ENCODE measurements at regions of chr12 and their contacts with region 1.

Region 1: DNA sequence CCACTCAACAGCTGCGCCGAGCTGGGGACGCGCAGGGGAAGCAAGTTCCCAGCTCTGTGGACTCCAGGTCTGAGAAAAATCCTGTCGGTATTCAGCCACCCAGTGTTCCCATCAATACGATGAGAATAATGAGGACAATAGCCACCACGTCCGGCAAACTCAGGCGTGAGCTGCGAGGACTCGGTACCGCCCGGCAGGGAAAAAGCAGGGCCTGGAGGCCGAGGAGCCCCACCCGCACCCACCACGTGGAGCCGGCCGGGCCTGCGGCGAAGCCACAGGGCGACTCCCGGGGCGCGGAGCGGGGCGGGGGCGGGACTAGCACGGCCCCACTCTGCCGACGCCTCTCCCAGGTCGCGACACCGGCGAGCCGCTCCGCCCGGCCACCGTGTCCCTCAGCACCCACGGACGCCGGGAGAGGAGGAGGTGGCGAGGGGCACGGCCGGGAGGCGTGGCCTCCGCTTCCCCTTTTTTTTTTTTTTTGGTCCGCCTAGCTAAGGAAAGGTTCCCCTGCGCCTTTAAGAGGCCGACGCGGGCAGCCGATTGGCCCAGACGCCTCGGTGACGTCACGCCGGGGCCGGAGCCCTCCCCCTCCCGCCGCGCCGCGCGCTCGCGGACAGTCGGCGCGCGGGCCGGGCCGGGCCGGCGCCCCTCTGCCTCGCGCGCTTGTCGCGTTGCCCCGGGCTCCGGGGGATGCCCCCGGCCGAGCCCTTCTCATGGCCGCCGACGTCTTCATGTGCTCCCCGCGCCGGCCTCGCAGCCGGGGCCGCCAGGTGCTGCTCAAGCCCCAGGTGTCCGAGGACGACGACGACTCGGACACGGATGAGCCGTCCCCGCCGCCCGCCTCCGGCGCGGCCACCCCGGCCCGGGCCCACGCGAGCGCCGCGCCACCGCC is at the start of gene MLXIP:
- DNase-seq: peak; percentile 92 to 95
- H3K4me3 ChIP-seq: peak within 1 kb of the TSS; percentile 64
- H3K4me3 Mint-ChIP-seq: peak within 1 kb of the TSS; percentile 76
- H3K27ac Mint-ChIP-seq: peak within 1 kb of the TSS; percentile 71
- H3K4me1 ChIP-seq: peaks cover 17% of the 10 kb centered on the region
- H3K4me1 Mint-ChIP-seq: peaks cover 19% of the 10 kb centered on the region
- H3K27me3 ChIP-seq: no peaks in the 10 kb centered on the region
- H3K27me3 Mint-ChIP-seq: no peaks in the 10 kb centered on the region
- CTCF ChIP-seq: no peak
- total RNA-seq, gene MLXIP: 51.3 and 54.5 TPM in 2 replicates

Region 2: GRCh38 chr12:122064025-122064777 is 14.2 kb before region 1 on chr12:
- CTCF ChIA-PET with region 1: interaction called, 6 read pairs
- POLR2A ChIA-PET with region 1: interaction called, 11 read pairs
- intact Hi-C with region 1: loop called (anchors 1 kb)
- DNase-seq: peak; percentile 97 to 99
- H3K4me3 ChIP-seq: peak overlapping the region; percentile 42
- H3K4me3 Mint-ChIP-seq: peak overlapping the region; percentile 85
- H3K27ac Mint-ChIP-seq: peak overlapping the region; percentile 83
- H3K4me1 ChIP-seq: peaks cover 27% of the 10 kb centered on the region
- H3K4me1 Mint-ChIP-seq: peaks cover 19% of the 10 kb centered on the region
- H3K27me3 ChIP-seq: no peaks in the 10 kb centered on the region
- H3K27me3 Mint-ChIP-seq: no peaks in the 10 kb centered on the region
- CTCF ChIP-seq: peak; percentile 29 to 75

Region 3: DNA sequence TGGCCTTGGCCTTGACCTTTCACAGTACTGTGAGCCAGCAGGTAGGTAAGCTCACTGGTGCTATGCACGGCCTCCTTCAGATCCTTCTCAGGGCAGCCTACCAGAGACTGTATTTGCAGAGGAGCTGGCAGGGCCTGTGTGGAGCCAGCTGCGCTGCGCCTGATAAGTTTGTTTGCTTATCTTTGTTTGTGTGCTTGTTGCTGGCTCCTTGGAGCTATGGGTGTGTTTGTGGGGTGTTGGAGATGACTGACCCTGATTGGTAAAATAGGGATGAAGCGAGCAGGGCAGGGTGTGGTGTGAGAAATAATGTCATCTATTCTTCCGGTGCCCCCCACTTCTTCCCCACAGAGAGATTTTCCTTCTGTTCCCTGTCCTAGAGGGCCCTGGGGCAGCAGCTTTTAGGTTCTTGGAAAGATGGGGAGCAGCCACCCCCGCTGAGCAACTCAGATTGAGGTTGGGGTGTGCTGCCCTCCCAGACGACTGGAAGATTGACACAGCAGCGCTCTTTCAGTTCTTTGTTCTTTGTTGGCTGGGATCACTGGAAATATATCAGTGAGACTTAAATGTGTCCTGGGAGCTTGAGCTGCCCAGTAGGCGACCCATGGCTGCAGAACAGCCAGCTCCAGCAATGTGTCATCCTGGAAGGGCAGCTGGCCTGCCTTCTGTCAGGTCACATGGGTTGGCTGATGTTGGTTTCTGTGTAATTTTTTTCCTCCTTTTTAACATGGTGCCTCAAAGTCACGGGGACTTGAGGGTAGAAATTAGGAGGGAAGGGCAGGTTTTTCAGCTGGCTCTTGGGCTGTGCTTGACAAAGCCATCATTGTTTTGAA is 19.8 kb after region 1 on chr12:
- CTCF ChIA-PET with region 1: interaction called, 4 read pairs
- POLR2A ChIA-PET with region 1: interaction called, 17 read pairs
- intact Hi-C with region 1: no loop called
- DNase-seq: peak; percentile 72 to 74
- H3K4me3 ChIP-seq: no peak overlapping the region
- H3K4me3 Mint-ChIP-seq: peak overlapping the region; percentile 27
- H3K27ac Mint-ChIP-seq: peak overlapping the region; percentile 68
- H3K4me1 ChIP-seq: peaks cover 29% of the 10 kb centered on the region
- H3K4me1 Mint-ChIP-seq: peaks cover 19% of the 10 kb centered on the region
- H3K27me3 ChIP-seq: no peaks in the 10 kb centered on the region
- H3K27me3 Mint-ChIP-seq: no peaks in the 10 kb centered on the region
- CTCF ChIP-seq: no peak

Region 4: GRCh38 chr12:122111089-122111641 is 32.8 kb after region 1 on chr12:
- CTCF ChIA-PET with region 1: no interaction called
- POLR2A ChIA-PET with region 1: interaction called, 4 read pairs
- intact Hi-C with region 1: loop called (anchors 5 kb)
- DNase-seq: peak in 1 of 2 experiments; percentile 36
- H3K4me3 ChIP-seq: no peak overlapping the region
- H3K4me3 Mint-ChIP-seq: peak overlapping the region; percentile 46
- H3K27ac Mint-ChIP-seq: peak overlapping the region; percentile 29
- H3K4me1 ChIP-seq: peaks cover 34% of the 10 kb centered on the region
- H3K4me1 Mint-ChIP-seq: peaks cover 10% of the 10 kb centered on the region
- H3K27me3 ChIP-seq: no peaks in the 10 kb centered on the region
- H3K27me3 Mint-ChIP-seq: no peaks in the 10 kb centered on the region
- CTCF ChIP-seq: no peak

Region 5: GRCh38 chr12:122123051-122123760 is 44.8 kb after region 1 on chr12:
- CTCF ChIA-PET with region 1: no interaction called
- POLR2A ChIA-PET with region 1: interaction called, 5 read pairs
- intact Hi-C with region 1: loop called (anchors 2 kb)
- DNase-seq: peak; percentile 62 to 81
- H3K4me3 ChIP-seq: no peak overlapping the region
- H3K4me3 Mint-ChIP-seq: no peak overlapping the region
- H3K27ac Mint-ChIP-seq: no peak overlapping the region
- H3K4me1 ChIP-seq: peaks cover 7% of the 10 kb centered on the region; the same call in 1 of the 2 replicates
- H3K4me1 Mint-ChIP-seq: peaks cover under 1% of the 10 kb centered on the region
- H3K27me3 ChIP-seq: no peaks in the 10 kb centered on the region
- H3K27me3 Mint-ChIP-seq: no peaks in the 10 kb centered on the region
- CTCF ChIP-seq: peak; percentile 59 to 74

Region 6: DNA sequence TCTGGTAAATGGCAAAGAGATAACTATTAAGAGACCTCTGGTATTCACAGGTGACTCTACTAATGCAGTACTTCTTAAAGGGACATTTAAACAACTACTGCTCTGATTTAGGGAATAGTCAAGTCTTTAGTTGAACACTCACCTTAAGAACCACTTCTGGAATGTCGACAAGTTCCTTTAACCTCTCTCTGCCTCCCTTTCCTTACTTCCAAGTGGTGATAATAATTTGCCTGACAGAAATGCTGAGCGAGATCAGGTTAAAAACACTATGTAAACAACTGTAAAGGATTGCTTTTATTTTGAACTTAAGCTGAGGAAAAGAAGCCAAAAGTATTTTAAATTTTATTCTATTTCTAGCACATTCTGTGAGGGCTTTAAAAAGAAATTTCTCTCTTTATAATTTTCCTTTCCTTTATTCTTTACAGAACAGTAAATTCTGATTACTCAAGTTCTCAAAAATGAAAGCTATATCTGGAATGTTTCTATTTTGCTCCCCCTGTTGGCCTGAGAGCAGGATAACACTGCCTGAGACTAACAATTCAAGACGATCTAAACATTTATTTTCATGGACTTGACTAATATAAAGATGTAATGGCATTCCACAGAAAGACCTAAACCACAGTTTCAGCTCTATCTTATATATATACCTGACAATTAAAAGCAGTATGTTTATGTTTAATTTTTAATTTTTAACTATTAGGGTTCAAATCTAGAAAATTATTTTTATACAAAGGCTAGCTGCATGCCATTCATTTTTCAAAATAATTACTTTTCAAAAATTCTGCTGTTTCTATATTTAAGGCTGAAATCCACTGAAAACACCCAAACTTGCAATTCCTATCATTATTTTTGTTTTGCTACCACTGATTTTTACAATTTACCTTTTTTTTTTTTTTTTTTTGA is 393.2 kb after region 1 on chr12:
- CTCF ChIA-PET with region 1: no interaction called
- POLR2A ChIA-PET with region 1: no interaction called
- intact Hi-C with region 1: no loop called
- DNase-seq: peak in 1 of 2 experiments; percentile 64
- H3K4me3 ChIP-seq: no peak overlapping the region
- H3K4me3 Mint-ChIP-seq: no peak overlapping the region
- H3K27ac Mint-ChIP-seq: no peak overlapping the region
- H3K4me1 ChIP-seq: peaks cover 19% of the 10 kb centered on the region
- H3K4me1 Mint-ChIP-seq: no peaks in the 10 kb centered on the region
- H3K27me3 ChIP-seq: no peaks in the 10 kb centered on the region
- H3K27me3 Mint-ChIP-seq: no peaks in the 10 kb centered on the region
- CTCF ChIP-seq: peak; percentile 76 to 83